HEK293 (cell line): ENCODE measurements at regions of chr11 and their contacts with region 1.

Region 1: DNA sequence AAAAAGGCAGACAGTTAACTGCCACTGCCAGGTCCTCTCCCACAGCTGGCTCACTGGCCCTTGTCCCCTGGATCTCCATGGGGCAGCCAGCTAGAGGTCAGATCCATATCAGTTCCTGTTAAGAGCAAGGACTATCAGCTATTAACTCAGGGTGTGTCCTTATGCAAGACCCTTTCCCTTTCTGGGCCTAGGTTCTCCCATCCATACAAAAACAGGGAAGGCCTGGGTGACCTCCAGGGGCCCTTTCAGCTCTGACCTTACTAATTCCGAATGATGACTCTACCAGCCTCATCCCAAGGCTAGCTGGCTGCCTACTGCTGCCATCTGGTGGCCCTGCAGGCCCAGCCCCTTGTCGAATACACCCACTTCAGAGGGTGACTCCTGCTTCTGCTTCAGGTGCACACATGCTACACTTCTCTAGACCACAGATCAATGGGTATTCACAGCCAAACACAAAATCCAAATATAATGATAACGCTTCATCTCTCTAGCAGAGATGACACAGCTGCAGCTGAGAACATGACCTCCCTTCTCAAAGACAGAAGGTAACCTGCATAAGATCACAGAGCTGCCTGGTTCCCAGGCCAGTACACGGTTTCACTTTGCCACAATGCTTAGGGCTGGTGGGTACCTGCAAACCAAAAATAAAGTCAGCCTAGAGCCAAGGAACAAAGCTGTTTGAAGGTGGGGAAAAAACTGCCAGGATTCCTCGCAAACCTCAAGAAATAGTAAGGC is 34.1 kb downstream of the SERGEF start:
- H3K4me3 ChIP-seq: no peak overlapping the region
- H3K27ac ChIP-seq: no peak overlapping the region
- H3K4me1 ChIP-seq: no peaks in the 10 kb centered on the region
- CTCF ChIP-seq: peak; percentile 49

Region 2: GRCh38 chr11:17598700-17599459 is 379.8 kb before region 1 on chr11:
- CTCF ChIA-PET with region 1: interaction called, 47 read pairs
- POLR2A ChIA-PET with region 1: no interaction called
- H3K4me3 ChIP-seq: no peak overlapping the region
- H3K27ac ChIP-seq: no peak overlapping the region
- H3K4me1 ChIP-seq: no peaks in the 10 kb centered on the region
- CTCF ChIP-seq: peak; percentile 72

Region 3: DNA sequence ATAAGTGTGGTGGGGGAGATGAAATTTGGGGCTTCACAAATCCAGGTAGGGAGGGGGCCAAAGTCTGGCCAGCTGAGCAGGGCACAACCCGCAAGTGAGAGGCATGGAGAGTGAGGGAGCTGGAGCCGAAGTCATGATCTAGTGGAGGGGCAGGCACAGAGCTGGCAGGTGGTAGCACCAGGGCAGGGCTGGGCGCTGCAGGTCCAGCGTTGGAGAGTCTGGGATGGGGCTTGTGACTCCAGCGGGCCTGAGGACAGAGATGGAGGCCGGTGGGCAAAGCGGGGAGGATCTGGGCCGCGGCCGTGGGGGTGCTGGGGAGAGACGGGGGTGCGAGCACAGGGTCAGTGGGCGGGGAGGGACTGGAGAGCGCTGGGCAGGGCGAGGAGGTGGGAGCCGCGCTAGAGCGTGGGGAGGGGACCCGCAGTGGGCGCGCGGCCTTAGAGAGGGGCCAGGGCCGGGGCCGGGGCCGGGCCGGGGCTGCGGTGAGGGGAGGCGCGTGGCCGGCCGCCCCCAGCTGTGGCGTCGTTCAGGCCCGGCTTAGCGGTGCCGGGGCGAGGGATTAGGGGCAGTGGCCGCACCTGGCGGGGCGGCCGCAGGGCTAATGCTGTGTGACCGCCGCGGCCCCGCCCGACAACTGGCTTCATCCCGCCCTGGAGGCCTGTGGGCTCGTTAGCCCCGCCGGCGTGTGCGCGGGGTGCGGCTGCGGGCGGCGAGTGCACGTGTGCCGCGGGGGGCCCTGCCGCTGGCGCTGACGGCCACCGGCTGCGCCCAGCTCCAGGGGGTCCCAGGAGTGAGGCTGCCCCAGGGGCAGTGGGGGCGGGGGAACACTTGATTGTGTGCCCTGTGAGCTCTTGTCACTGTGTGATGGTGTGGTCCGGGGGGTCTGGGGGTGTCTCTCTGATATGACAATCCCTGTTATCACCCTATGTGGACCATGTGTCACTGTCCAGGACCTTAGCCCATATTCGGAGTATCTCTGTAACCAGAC is 283.0 kb before region 1 on chr11:
- CTCF ChIA-PET with region 1: no interaction called
- POLR2A ChIA-PET with region 1: no interaction called
- H3K4me3 ChIP-seq: no peak overlapping the region
- H3K27ac ChIP-seq: no peak overlapping the region
- H3K4me1 ChIP-seq: no peaks in the 10 kb centered on the region
- CTCF ChIP-seq: no peak

Region 4: GRCh38 chr11:17722000-17722643 is 256.6 kb before region 1 on chr11:
- CTCF ChIA-PET with region 1: interaction called, 17 read pairs
- POLR2A ChIA-PET with region 1: no interaction called
- H3K4me3 ChIP-seq: no peak overlapping the region
- H3K27ac ChIP-seq: no peak overlapping the region
- H3K4me1 ChIP-seq: no peaks in the 10 kb centered on the region
- CTCF ChIP-seq: peak; percentile 35; the same call in 1 of the 2 replicates

Region 5: DNA sequence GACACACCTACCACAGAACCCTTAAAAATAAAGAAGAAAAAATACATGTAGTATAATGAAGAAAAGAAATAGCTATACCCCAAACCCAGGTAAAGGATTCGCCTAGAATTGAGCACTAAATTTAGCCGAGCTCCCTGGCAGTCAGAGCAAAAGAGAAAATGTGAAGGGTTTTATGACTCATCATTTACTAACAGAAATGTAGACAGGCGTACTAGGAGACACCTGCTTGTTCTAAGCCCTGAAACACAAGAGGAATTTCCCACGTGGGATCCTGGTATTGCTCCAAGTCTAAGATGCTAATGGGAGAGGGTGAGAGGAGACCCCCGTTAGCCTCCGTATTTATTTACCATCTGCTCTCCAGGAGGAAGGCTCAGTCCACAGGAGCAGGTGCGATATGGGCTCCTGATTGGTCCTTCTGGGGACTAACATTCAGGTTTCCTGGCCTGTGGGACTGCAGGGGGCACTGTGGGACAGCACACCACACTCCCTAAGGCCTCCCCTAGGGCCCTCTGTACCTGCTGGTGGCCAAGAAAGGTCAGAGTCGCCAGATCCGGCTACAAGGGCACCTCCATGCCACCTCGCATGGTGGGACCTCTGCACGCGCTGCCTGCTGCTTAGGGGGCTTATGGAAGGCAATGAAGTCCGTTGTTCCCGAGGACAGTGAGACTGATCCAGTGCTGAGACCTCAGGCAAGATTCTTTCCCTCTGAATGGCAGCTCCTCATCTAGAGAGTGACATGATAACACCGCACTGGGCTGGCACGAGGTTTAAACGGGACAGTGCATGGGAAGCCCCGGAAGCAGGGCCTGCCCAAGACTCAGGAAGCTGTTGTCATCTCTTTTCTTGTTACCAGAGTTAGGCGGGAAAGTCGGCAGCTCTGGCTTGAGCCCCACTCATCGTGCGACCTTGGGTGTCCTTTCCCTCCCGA is 218.4 kb before region 1 on chr11:
- CTCF ChIA-PET with region 1: interaction called, 46 read pairs
- POLR2A ChIA-PET with region 1: no interaction called
- H3K4me3 ChIP-seq: no peak overlapping the region
- H3K27ac ChIP-seq: no peak overlapping the region
- H3K4me1 ChIP-seq: no peaks in the 10 kb centered on the region
- CTCF ChIP-seq: no peak

Region 6: DNA sequence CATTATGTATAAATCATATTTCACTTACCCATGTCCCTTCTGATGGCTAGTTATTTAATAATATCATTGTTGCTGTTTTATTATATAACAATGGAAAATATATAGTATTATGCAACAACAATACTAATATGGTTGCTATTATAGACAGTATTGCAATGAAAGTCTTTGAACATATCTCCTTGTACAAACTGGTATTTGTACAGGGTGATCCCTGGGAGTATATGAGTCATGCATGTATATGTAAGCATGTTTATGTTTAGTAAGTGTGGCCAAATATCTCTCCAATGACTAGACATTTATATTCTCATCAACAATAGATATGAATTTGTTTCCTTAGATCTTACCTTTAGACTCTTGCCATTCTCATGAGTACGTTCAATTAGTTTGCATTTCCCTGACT is 188.3 kb before region 1 on chr11:
- CTCF ChIA-PET with region 1: no interaction called
- POLR2A ChIA-PET with region 1: no interaction called
- H3K4me3 ChIP-seq: no peak overlapping the region
- H3K27ac ChIP-seq: no peak overlapping the region
- H3K4me1 ChIP-seq: no peaks in the 10 kb centered on the region
- CTCF ChIP-seq: no peak

Region 7: DNA sequence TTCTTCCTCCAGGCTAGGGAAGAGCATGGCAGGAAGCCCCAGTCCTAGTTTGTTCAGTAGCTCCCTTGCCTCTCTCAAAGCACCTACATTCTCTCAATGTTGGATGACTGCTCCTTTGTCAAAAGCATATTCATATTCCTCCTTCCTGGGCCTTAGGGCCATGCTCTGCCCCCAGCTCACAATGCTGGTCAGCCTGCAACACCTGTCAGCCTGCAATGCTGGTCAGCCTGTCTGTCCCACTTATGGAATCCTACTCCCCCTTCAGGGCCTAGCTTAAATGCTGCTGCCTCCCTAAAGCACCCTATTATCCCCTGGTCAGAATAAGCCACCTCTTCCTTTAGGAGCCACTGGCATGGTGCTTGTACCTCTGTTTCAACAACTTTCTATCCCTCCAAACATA is 11.1 kb before region 1 on chr11:
- CTCF ChIA-PET with region 1: interaction called, 37 read pairs
- POLR2A ChIA-PET with region 1: no interaction called
- H3K4me3 ChIP-seq: no peak overlapping the region
- H3K27ac ChIP-seq: no peak overlapping the region
- H3K4me1 ChIP-seq: no peaks in the 10 kb centered on the region
- CTCF ChIP-seq: no peak

Region 8: GRCh38 chr11:17991783-17992433 is 13.2 kb after region 1 on chr11:
- CTCF ChIA-PET with region 1: interaction called, 34 read pairs
- POLR2A ChIA-PET with region 1: no interaction called
- H3K4me3 ChIP-seq: no peak overlapping the region
- H3K27ac ChIP-seq: no peak overlapping the region
- H3K4me1 ChIP-seq: no peaks in the 10 kb centered on the region
- CTCF ChIP-seq: 0 out of 2 replicates have a peak, but pooled peaks have one; percentile 27

Region 9: DNA sequence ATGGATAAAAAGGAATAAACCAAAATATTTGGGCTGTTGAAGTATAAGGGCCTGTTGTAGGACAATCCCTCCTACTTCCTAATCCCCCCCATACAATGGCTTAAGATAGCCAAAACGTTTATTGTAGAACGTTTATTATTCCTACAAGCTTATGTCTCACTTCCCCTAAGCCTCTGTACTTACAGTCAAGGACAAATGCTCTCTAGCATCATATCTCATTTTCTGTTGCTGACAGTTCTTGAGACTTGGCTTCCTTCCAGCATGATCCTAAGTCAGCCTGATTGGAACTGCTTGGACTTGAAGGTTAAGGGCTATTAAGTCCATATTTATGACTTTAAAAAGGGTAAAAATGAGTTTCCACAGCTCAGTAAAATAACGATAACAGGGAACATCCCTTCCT is 629.7 kb after region 1 on chr11:
- CTCF ChIA-PET with region 1: no interaction called
- POLR2A ChIA-PET with region 1: no interaction called
- H3K4me3 ChIP-seq: no peak overlapping the region
- H3K27ac ChIP-seq: no peak overlapping the region
- H3K4me1 ChIP-seq: no peaks in the 10 kb centered on the region
- CTCF ChIP-seq: no peak